ENCODE measurements at regions of chr2 and their contacts with region 1.

Region 1: GRCh38 chr2:112784199-112785189 is at the start of gene IL1A:
- DNase-seq: peak; percentile 92
- H3K4me3 Mint-ChIP-seq: peak within 1 kb of the TSS; percentile 79
- H3K27ac Mint-ChIP-seq: peak within 1 kb of the TSS; percentile 85
- H3K4me1 Mint-ChIP-seq: peaks cover 57% of the 10 kb centered on the region
- H3K27me3 Mint-ChIP-seq: no peaks in the 10 kb centered on the region
- CTCF ChIP-seq: no peak
- total RNA-seq, gene IL1A: 99.1 and 170 TPM in 2 replicates

Region 2: DNA sequence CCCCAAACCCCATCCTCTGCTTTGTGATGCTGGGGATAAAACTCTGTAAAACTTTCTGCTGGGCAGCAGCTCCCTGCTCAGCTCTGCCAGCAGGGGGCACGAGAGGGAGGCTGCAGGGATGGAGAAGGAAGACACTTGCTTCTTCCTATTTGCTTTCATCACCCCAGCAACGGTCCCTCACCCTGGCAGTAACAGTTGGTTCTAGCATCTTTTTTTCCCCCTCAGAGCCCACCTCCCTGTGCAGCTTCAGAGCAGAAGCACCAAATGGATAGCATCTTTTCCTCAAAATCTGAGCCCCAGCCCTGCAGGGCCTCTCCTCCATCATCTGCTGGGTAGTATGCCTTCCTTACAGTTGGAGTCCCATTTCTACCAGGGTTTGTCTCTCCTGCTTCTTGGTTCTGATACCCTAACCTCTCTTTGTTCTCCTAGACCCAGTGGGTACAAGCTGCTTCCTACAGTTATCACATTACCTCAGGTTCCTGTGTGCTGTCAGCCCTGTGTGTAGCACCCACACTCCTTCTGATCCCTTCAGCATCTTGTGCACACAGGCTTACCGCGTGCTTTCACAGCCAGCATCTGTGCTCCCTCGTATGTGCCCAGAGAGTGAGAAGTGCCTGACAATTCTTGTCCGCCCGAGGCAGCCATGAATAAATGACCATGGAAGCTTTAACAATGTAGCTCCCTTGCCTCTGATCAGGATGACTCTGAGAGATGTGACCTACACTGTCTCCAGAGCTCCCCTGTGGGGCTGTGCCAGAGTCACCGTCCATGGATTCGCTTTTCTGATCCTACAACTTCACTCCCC is 34.5 kb before region 1 on chr2:
- CTCF ChIA-PET with region 1: interaction called, 38 read pairs
- POLR2A ChIA-PET with region 1: interaction called, 10 read pairs
- intact Hi-C with region 1: no loop called
- DNase-seq: peak; percentile 70
- H3K4me3 Mint-ChIP-seq: no peak overlapping the region
- H3K27ac Mint-ChIP-seq: peak overlapping the region; percentile 74
- H3K4me1 Mint-ChIP-seq: peaks cover 23% of the 10 kb centered on the region
- H3K27me3 Mint-ChIP-seq: no peaks in the 10 kb centered on the region
- CTCF ChIP-seq: peak; percentile 86

Region 3: DNA sequence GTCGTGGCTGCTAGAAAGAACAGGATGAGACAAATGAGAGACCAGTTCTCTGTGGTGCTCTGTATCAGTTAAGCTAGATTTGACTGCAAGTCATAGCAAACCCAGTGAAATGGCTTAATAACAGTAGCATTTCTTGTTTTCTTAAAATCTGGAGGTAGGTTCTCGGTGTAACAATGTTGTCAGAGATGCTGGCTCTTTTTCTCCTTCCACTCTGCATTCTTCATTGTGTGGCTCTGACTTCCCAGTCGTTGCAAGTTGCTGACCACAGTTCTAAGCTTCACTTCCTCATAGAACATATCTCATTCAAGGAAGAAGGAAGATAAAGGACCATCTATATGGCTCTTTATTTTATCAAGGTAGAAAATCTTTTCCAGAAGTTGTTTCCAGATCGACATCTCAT is 12.2 kb before region 1 on chr2:
- CTCF ChIA-PET with region 1: interaction called, 4 read pairs
- POLR2A ChIA-PET with region 1: interaction called, 37 read pairs
- intact Hi-C with region 1: no loop called
- DNase-seq: no peak
- H3K4me3 Mint-ChIP-seq: no peak overlapping the region
- H3K27ac Mint-ChIP-seq: no peak overlapping the region
- H3K4me1 Mint-ChIP-seq: peaks cover 13% of the 10 kb centered on the region
- H3K27me3 Mint-ChIP-seq: no peaks in the 10 kb centered on the region
- CTCF ChIP-seq: no peak

Region 4: DNA sequence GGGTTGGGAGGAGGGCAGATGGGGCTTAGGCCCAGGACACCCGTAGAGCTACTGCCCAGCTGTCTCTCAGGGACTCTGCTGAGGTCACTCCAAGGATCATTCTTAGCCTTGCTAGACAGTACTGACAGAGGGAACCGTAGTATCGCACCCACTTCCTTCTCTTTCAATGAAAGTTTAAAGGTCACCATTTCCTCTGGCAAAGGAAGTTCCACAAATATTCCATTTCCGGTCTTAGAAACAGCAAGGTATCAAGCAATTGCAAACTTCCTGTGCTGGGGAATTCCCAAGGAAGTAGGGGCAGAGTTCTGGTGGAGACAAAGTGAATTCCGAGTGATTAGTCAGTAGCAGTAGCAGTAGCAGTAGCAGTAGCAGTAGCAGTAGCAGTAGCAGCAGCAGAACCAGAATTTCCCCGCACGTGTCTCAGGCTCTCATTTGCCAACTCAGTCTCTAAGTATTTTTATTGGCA is 27.4 kb after region 1 on chr2:
- CTCF ChIA-PET with region 1: interaction called, 3 read pairs
- POLR2A ChIA-PET with region 1: interaction called, 112 read pairs
- intact Hi-C with region 1: no loop called
- DNase-seq: peak; percentile 82
- H3K4me3 Mint-ChIP-seq: no peak overlapping the region
- H3K27ac Mint-ChIP-seq: peak overlapping the region; percentile 97
- H3K4me1 Mint-ChIP-seq: peaks cover 46% of the 10 kb centered on the region
- H3K27me3 Mint-ChIP-seq: no peaks in the 10 kb centered on the region
- CTCF ChIP-seq: no peak

Region 5: DNA sequence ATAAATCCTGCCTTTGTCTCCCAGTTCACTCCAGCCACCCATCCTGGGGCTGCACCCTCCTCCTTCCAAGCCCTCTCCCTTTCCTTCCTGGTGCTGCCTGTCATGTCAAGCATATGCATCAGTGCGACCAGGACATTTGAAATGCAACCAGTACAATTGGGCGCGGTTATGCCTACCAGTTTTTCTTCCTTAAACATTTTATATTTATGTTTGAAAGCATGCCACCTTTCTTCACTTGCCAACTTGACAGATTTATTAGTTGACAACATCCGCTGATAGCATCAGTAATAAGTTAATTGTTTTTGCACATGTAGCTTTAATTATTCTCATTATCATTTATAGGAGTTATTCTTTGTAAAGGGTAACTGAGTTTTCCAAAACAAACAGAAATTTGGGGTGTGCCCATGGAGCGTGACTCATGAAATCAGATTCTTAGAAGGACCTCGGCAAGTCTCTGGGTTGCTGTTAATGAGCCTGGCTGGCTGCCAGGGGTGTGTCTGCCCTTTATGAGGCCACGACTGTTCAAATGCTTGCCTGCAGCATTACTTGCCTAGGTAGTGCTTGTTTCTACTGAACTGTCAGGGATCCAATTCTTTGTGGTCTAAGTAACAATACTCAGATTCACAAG is 84.9 kb after region 1 on chr2:
- CTCF ChIA-PET with region 1: no interaction called
- POLR2A ChIA-PET with region 1: interaction called, 16 read pairs
- intact Hi-C with region 1: no loop called
- DNase-seq: peak; percentile 99
- H3K4me3 Mint-ChIP-seq: peak overlapping the region; percentile 1
- H3K27ac Mint-ChIP-seq: peak overlapping the region; percentile 9
- H3K4me1 Mint-ChIP-seq: peaks cover 28% of the 10 kb centered on the region
- H3K27me3 Mint-ChIP-seq: no peaks in the 10 kb centered on the region
- CTCF ChIP-seq: no peak

Region 6: DNA sequence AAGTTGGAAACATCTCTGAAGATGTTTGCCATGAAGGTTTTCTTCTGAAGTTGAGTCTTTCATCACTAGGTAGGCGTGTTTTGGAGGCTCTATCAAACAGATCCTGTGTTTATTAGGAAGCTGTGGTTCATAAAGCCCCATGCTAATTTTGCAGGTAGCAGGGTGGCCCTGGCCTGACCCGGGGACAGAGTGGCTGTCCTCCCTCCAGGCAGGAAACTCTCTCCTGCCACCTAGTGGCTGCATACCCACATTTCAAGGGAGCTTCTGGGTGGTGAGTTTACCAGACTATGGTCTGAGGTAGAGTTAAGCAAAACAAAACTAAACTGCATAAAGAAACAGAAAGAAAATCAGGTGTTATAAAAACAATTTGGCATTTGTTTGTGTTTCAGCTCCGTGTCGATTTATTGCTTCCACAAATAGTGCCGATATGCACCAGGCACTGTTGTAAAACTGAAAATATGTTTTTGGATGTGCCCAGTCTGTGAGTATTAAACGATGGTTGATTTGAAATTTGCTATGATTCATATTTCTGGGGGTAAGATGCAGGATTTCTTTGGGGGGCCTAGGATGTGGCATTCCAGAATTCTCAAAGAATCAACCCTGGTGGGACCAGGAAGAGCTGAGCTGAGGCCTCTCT is 100.5 kb after region 1 on chr2:
- CTCF ChIA-PET with region 1: interaction called, 27 read pairs
- POLR2A ChIA-PET with region 1: interaction called, 24 read pairs
- intact Hi-C with region 1: loop called (anchors 1 kb)
- DNase-seq: peak; percentile 61
- H3K4me3 Mint-ChIP-seq: no peak overlapping the region
- H3K27ac Mint-ChIP-seq: no peak overlapping the region
- H3K4me1 Mint-ChIP-seq: peaks cover 19% of the 10 kb centered on the region
- H3K27me3 Mint-ChIP-seq: no peaks in the 10 kb centered on the region
- CTCF ChIP-seq: peak; percentile 96

Region 7: DNA sequence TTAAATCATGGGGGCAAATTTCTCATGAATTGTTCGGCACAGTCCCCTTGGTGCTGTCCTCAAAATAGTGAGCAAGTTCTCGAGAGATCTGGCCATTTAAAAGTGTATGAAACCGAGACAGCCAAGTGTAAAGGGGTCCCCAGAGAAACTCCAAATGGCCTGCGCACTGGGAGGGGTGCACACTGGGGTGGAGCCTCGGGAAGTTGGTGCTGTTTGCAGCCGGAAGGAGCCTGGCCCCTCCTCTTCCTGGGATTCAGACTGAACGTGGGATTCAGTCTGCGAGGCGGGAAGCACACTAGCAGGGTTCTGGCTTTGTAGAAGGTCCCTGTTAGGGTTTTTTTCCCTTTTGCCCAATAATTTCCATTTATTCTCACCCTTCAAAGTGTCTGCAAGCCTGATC is 891.4 kb after region 1 on chr2:
- CTCF ChIA-PET with region 1: no interaction called
- POLR2A ChIA-PET with region 1: no interaction called
- intact Hi-C with region 1: no loop called
- DNase-seq: no peak
- H3K4me3 Mint-ChIP-seq: no peak overlapping the region
- H3K27ac Mint-ChIP-seq: no peak overlapping the region
- H3K4me1 Mint-ChIP-seq: no peaks in the 10 kb centered on the region
- H3K27me3 Mint-ChIP-seq: no peaks in the 10 kb centered on the region
- CTCF ChIP-seq: no peak

Measured in MCF 10A (cell line).